ENCODE measurements at regions of chr5 and their contacts with region 1.

Region 1: DNA sequence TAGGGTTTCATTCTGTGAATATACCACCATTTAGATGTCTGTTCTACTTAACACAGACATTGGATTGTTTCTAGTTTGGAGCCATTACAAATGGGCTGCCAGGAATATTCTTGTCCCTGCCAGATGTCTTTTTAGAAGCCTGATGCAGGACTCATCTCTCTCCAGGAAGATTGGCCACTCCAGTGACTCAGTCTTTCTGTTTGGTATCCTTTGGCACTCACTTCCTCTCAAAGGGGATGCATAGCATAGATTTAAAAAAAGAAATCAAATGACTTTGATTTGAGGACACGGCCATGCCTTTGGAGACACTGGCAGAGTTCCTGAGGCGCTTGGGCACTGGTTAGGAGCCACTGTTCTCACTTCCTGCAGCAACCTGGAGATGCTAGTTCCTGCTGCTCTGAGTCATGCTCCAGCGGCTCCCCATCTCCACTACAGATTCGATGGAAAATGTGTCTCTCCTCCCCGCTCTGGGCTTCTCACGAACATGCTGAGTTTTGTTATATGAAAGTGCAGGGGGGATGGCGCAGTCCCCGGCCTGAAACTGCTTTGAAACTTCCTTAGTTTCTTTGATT is 3.5 kb upstream of the ZNF366 start:
- DNase-seq: peak; percentile 83

Region 2: DNA sequence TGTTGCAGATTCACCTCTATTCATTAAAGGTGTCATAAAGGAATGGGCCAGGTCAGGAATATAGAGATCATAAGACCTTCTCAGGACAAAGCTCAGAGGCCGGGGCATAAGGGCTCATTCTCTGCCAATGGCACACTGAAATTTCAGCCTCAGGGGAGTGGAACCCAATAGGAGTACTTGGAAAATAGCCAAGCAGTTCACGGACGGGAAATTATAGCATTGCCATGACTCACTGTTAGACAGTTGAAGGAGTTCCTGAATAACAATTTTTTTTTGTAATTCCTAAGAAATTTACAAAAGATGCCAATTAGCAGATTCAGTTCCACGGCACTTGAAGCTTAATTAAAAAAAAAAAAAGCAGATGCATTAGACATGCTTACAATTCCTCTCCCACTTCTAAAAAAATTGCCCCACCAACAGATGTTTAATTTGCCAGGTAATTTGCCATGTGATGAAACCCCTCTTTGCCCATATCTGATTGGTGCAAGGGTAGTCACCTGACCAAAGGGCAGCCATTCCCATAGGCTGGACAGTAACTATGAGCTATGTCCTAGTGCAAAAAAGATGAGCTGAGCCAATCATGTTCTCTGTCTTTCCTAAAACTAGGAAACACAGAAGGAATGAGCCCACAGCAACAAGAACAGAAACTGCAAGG is 131.9 kb before region 1 on chr5:
- intact Hi-C with region 1: loop called in 1 of 2 experiments (anchors 10 kb)
- DNase-seq: no peak

Region 3: DNA sequence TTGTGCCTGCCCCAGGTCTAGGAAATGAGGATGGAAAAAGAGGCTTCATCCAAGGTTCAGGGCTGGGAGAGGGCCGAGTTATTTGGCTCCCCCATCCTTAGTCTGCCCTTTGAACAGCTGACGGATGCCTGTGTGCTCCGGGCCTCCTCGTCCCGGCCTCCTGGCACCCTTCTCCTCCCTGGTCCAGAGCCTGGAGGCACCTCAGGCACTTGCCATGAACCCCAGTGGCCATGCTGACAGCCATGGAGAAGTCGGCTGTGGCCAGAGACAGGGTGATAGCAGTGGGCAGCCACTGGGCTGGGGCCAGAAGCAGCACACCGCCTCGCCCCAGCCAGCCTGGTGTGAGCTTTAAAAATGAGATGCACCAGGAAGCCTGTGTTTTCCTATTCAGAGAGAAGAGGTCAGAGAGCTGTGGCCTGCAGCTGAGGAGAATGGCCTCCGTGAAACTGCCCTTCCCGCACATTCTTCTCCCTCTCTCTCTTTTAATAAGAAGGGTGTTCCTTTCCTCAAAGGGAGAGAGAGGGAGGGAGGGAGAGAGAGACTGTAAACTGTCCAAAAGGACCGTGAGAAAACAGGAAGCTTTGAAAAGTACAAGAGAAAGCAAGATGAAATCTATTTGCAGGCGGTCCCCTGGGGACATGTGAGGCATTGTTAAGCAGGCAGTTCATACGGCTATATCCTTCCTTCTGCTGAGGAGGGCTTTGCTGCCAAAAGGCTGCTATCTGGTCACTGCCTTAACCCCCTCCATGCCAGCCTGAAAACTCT is 58.8 kb before region 1 on chr5:
- intact Hi-C with region 1: loop called in 1 of 2 experiments (anchors 5 kb)
- DNase-seq: peak; percentile 93